ENCODE measurements at regions of chr1 and their contacts with region 1.

Region 1: GRCh38 chr1:179709841-179710329 is 33.2 kb upstream of the FAM163A start:
- DNase-seq: no peak
- ATAC-seq: peak in 1 of 2 donors; percentile 72
- H3K4me3 ChIP-seq: no peak overlapping the region
- H3K27ac ChIP-seq: no peak overlapping the region
- H3K4me1 ChIP-seq: peaks cover 26% of the 10 kb centered on the region
- H3K27me3 ChIP-seq: no peaks in the 10 kb centered on the region
- CTCF ChIP-seq: no peak

Region 2: DNA sequence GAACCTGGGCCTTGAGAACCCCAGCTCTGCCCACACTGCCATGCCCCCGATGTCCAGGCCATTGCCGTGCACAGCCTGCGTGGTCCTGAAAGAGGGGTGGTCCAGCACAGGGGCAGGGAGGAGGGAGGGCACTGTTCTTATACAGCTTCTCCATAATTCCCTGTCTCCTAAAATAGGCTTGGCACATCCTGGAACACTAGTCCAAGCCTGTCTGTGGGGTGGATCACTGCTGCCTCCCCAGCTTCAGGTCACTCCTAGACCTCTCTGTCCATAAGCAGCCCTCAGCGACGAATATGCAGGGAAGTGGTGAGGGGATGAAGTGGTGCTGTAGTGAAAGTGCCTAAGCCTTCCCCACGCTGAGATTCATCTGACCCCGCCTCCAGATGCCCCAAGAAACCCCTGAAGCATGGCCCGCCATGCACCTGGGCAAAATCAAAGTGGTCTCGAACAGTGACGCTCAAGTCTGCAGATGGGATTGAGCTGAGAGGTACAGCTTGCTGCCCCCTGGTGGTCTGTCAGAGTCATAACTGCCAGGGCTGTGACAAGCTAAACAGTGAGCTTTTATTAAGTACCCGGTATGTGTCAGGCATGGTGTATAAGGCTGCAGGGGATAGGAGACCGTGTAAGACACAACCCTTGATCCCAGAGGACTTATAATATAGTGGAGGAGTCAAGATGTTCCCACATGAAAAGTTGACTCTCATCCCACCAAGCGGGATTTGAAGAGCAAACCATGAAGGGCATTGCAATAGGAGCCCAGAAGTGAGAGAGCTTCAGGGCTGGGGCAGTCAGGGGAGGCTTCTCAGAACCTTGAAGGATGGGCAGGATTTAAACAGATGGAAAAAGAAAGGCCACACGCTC is 99.9 kb after region 1 on chr1:
- intact Hi-C with region 1: loop called (anchors 10 kb)
- DNase-seq: no peak
- ATAC-seq: peak; percentile 73 to 75
- H3K4me3 ChIP-seq: no peak overlapping the region
- H3K27ac ChIP-seq: no peak overlapping the region
- H3K4me1 ChIP-seq: peaks cover 11% of the 10 kb centered on the region
- H3K27me3 ChIP-seq: peaks cover 9% of the 10 kb centered on the region
- CTCF ChIP-seq: peak; percentile 93